WTC11 (cell line): ENCODE measurements at regions of chr4 and their contacts with region 1.

Region 1: DNA sequence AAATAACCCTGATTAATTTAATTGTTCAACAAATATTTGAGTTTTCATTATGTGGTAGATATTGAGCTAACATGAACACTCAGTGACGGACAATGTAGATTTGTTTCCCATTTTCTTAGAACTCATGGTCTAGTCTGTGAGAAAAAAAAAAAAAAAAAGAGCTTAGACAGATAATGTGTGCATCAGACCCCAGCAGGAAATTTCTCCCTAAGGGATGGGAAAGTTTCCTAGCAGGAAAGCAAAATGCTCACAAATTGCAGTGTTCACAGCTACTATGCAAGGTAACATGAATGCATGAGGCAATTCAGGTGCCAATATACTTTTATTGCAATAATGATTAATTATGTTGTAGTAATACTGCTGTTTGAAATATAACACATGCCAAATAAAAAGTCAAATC is 843.2 kb upstream of the SLIT2 start:
- DNase-seq: no peak
- ATAC-seq: no peak
- H3K4me3 Mint-ChIP-seq: no peak overlapping the region
- H3K27ac Mint-ChIP-seq: no peak overlapping the region
- H3K4me1 Mint-ChIP-seq: 0 out of 2 replicates have a peak, but pooled peaks cover 2% of the 10 kb centered on the region
- H3K27me3 Mint-ChIP-seq: peaks cover 16% of the 10 kb centered on the region
- CTCF ChIP-seq: no peak

Region 2: GRCh38 chr4:19438233-19438632 is 29.7 kb after region 1 on chr4:
- CTCF ChIA-PET with region 1: no interaction called
- POLR2A ChIA-PET with region 1: no interaction called
- DNase-seq: no peak
- ATAC-seq: no peak
- H3K4me3 Mint-ChIP-seq: no peak overlapping the region
- H3K27ac Mint-ChIP-seq: no peak overlapping the region
- H3K4me1 Mint-ChIP-seq: no peaks in the 10 kb centered on the region
- H3K27me3 Mint-ChIP-seq: peaks cover 75% of the 10 kb centered on the region
- CTCF ChIP-seq: no peak

Region 3: GRCh38 chr4:19473569-19473968 is 65.1 kb after region 1 on chr4:
- CTCF ChIA-PET with region 1: no interaction called
- POLR2A ChIA-PET with region 1: no interaction called
- DNase-seq: no peak
- ATAC-seq: no peak
- H3K4me3 Mint-ChIP-seq: no peak overlapping the region
- H3K27ac Mint-ChIP-seq: no peak overlapping the region
- H3K4me1 Mint-ChIP-seq: peaks cover 5% of the 10 kb centered on the region; the same call in 1 of the 2 replicates
- H3K27me3 Mint-ChIP-seq: no peaks in the 10 kb centered on the region
- CTCF ChIP-seq: no peak

Region 4: GRCh38 chr4:19711871-19712270 is 303.4 kb after region 1 on chr4:
- CTCF ChIA-PET with region 1: no interaction called
- POLR2A ChIA-PET with region 1: interaction called, 14 read pairs
- DNase-seq: no peak
- ATAC-seq: no peak
- H3K4me3 Mint-ChIP-seq: no peak overlapping the region
- H3K27ac Mint-ChIP-seq: no peak overlapping the region
- H3K4me1 Mint-ChIP-seq: 0 out of 2 replicates have a peak, but pooled peaks cover 2% of the 10 kb centered on the region
- H3K27me3 Mint-ChIP-seq: no peaks in the 10 kb centered on the region
- CTCF ChIP-seq: no peak